CD14-positive monocyte (primary cell): ENCODE measurements at regions of chr9 and their contacts with region 1.

Region 1: DNA sequence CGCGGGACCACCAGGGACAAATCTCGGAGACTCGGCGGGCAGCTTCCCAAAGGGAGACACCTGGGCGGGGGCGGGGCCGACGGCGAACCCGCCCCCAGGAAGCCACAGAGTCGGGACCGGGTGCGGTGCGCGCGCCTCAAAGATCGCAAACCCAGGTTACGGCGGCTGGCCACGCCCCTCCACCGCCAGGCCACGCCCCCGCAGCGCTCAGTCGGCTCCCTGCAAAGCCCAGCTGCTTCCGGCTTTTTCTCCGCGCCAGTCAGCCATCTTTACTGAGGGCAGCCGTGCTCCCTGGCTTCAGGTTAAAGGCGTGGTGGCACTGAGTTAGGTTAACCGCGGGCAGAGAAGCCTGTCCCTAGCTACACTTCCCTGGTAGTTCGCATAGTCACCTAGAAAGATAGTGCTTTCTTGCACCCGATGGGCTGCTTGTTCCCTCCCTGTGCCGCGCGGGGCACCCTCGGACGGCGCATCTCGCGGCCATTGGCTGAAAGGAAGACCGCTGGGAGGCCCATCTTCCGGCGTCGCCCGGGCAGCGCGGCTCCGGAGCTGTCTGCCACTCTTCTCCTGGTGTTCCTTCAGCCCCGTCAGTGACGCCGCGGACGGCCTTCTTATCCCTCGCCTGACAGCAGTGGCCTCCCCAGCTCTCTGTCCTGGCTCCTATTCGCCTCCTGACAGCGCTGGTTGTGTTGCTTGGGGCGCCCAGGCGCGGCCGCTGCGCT is at the start of gene TBC1D2:
- DNase-seq: peak; percentile 92 to 95 (median 94)
- H3K4me3 ChIP-seq: peak within 1 kb of the TSS; percentile 57 to 98 (median 86)
- H3K4me3 Mint-ChIP-seq: peak within 1 kb of the TSS; percentile 95 to 98
- H3K27ac ChIP-seq: peak within 1 kb of the TSS; percentile 93 to 96
- H3K27ac Mint-ChIP-seq: peak within 1 kb of the TSS; percentile 95 to 99 (median 98)
- H3K4me1 ChIP-seq: peaks cover 50 to 51% of the 10 kb centered on the region in 2 donors
- H3K4me1 Mint-ChIP-seq: peaks cover 48% of the 10 kb centered on the region
- H3K27me3 ChIP-seq: no peaks in the 10 kb centered on the region
- H3K27me3 Mint-ChIP-seq: no peaks in the 10 kb centered on the region
- CTCF ChIP-seq: peak; percentile 20
- polyA plus RNA-seq, gene TBC1D2: 23.2 to 55.7 (median 34.4) TPM

Region 2: DNA sequence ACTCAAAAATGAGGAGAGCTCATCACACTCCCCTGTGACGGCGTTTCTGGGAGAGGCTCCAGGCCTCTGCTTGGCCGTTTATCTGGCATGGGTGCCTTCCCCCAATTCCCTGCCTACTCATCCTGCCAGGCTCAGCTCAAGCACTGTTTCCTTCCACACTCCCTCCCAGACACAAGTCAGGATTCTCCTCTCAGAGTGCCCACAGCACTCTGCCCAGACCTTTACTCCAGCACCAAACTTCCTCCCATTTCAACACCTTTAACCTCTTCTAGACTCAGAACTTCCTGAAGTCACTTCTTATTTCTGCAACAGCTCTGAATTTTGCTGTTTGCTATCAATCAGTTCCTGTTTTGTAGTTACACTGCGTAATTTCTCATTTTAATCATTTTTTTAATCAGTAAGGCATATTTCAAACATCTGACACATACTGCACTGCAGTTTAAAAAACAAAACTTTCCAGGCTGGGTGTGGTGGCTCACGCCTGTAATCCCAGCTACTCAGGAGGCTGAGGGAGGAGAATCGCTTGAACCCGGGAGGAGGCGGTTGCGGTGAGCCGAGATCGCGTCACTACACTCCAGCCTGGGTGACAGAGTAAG is 349.4 kb before region 1 on chr9:
- intact Hi-C with region 1: loop called in 1 of 2 experiments (anchors 5 kb)
- DNase-seq: peak; percentile 79 to 94 (median 88)
- H3K4me3 ChIP-seq: peak overlapping the region; percentile 1 to 56 (median 24)
- H3K4me3 Mint-ChIP-seq: peak overlapping the region; percentile 74 to 83
- H3K27ac ChIP-seq: peak overlapping the region; percentile 87 to 95
- H3K27ac Mint-ChIP-seq: peak overlapping the region; percentile 95 to 99 (median 98)
- H3K4me1 ChIP-seq: peaks cover 53 to 64% of the 10 kb centered on the region in 2 donors
- H3K4me1 Mint-ChIP-seq: peaks cover 54% of the 10 kb centered on the region
- H3K27me3 ChIP-seq: no peaks in the 10 kb centered on the region
- H3K27me3 Mint-ChIP-seq: peaks cover 0 to 4% (median 0%) of the 10 kb centered on the region in 3 donors
- CTCF ChIP-seq: no peak

Region 3: GRCh38 chr9:97921959-97922724 is 333.6 kb before region 1 on chr9 and contains the start of gene TRMO:
- intact Hi-C with region 1: loop called (anchors 5 to 10 kb)
- DNase-seq: peak; percentile 99 to 100 (median 99)
- H3K4me3 ChIP-seq: peak within 1 kb of the TSS; percentile 53 to 89 (median 83)
- H3K4me3 Mint-ChIP-seq: peak within 1 kb of the TSS; percentile 84 to 97
- H3K27ac ChIP-seq: peak within 1 kb of the TSS; percentile 94 to 98
- H3K27ac Mint-ChIP-seq: peak within 1 kb of the TSS; percentile 99 to 100 (median 99)
- H3K4me1 ChIP-seq: peaks cover 39 to 54% of the 10 kb centered on the region in 2 donors
- H3K4me1 Mint-ChIP-seq: peaks cover 49% of the 10 kb centered on the region
- H3K27me3 ChIP-seq: no peaks in the 10 kb centered on the region
- H3K27me3 Mint-ChIP-seq: no peaks in the 10 kb centered on the region
- CTCF ChIP-seq: peak; percentile 22
- polyA plus RNA-seq, gene TRMO: 13.4 to 20.6 (median 13.5) TPM

Region 4: DNA sequence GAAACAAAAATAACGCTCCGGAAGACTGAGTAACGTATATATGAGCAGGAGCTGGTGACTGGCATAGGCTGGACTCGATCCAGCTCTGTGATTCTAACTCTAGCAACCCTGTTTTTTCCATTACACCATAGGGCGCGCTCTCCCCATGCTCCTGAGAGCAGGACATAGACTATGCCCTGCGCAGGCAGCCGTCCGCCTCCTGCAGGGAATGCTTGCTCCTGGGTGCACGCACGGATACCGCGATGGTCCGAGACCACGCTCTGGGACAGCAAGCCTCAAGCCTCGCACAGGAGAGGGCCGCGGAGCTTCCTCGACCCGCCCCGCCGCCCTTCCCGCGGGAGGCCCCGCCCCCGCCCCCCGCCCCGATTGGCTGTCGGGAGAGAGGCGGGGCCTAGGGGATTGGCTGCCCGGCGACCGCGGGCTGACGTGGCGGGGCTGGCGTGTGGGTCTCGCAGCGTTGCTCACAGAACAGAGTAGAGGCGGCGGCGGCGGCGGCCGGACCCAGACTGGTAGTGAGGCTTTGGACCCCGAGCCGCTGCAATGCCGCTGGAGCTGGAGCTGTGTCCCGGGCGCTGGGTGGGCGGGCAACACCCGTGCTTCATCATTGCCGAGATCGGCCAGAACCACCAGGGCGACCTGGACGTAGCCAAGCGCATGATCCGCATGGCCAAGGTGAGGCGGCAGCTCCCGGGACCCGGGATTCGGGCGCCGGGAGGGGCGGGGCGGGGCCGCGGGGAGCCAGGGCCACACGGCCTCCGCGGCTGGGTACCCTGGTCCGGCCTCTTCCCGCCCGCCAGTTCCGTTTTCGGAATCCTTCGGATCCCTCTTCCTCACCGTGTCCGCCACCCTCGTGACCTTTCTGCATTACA is 199.2 kb before region 1 on chr9 and contains the start of gene NANS:
- intact Hi-C with region 1: loop called in 1 of 2 experiments (anchors 5 kb)
- DNase-seq: peak; percentile 88 to 92 (median 90)
- H3K4me3 ChIP-seq: peak within 1 kb of the TSS; percentile 69 to 99 (median 90)
- H3K4me3 Mint-ChIP-seq: peak within 1 kb of the TSS; percentile 99
- H3K27ac ChIP-seq: peak within 1 kb of the TSS; percentile 90 to 95
- H3K27ac Mint-ChIP-seq: peak within 1 kb of the TSS; percentile 96 to 99 (median 98)
- H3K4me1 ChIP-seq: peaks cover 23 to 24% of the 10 kb centered on the region in 2 donors
- H3K4me1 Mint-ChIP-seq: peaks cover 32% of the 10 kb centered on the region
- H3K27me3 ChIP-seq: no peaks in the 10 kb centered on the region
- H3K27me3 Mint-ChIP-seq: no peaks in the 10 kb centered on the region
- CTCF ChIP-seq: no peak
- polyA plus RNA-seq, gene NANS: 41.3 to 109 (median 95.9) TPM

Region 5: GRCh38 chr9:98118640-98119601 is 136.8 kb before region 1 on chr9 and contains the start of gene TRIM14:
- intact Hi-C with region 1: loop called (anchors 10 kb)
- DNase-seq: peak; percentile 43 to 50 (median 46)
- H3K4me3 ChIP-seq: peak within 1 kb of the TSS; percentile 68 to 89 (median 72)
- H3K4me3 Mint-ChIP-seq: peak within 1 kb of the TSS; percentile 86 to 93
- H3K27ac ChIP-seq: peak within 1 kb of the TSS; percentile 87 to 89
- H3K27ac Mint-ChIP-seq: peak within 1 kb of the TSS; percentile 94 to 98 (median 96)
- H3K4me1 ChIP-seq: peaks cover 40 to 43% of the 10 kb centered on the region in 2 donors
- H3K4me1 Mint-ChIP-seq: peaks cover 54% of the 10 kb centered on the region
- H3K27me3 ChIP-seq: no peaks in the 10 kb centered on the region
- H3K27me3 Mint-ChIP-seq: no peaks in the 10 kb centered on the region
- CTCF ChIP-seq: no peak
- polyA plus RNA-seq, gene TRIM14: 23.0 to 30.6 (median 28.5) TPM

Region 6: GRCh38 chr9:98129451-98129881 is 126.3 kb before region 1 on chr9:
- intact Hi-C with region 1: loop called in 1 of 2 experiments (anchors 10 kb)
- DNase-seq: peak; percentile 90 to 96 (median 95)
- H3K4me3 ChIP-seq: peak overlapping the region in 1 of 3 experiments; percentile 33
- H3K4me3 Mint-ChIP-seq: peak overlapping the region; percentile 12 to 60
- H3K27ac ChIP-seq: peak overlapping the region; percentile 84 to 88
- H3K27ac Mint-ChIP-seq: peak overlapping the region; percentile 91 to 98 (median 94)
- H3K4me1 ChIP-seq: peaks cover 23% of the 10 kb centered on the region in 2 donors
- H3K4me1 Mint-ChIP-seq: peaks cover 28% of the 10 kb centered on the region
- H3K27me3 ChIP-seq: no peaks in the 10 kb centered on the region
- H3K27me3 Mint-ChIP-seq: peaks cover 0 to 4% (median 0%) of the 10 kb centered on the region in 3 donors
- CTCF ChIP-seq: no peak

Region 7: GRCh38 chr9:98201102-98201501 is 54.6 kb before region 1 on chr9:
- intact Hi-C with region 1: no loop called
- DNase-seq: no peak
- H3K4me3 ChIP-seq: no peak overlapping the region
- H3K4me3 Mint-ChIP-seq: no peak overlapping the region
- H3K27ac ChIP-seq: peak overlapping the region in 1 of 2 donors; percentile 28
- H3K27ac Mint-ChIP-seq: peak overlapping the region in 3 of 7 donors; percentile 10 to 54 (median 19)
- H3K4me1 ChIP-seq: no peaks in the 10 kb centered on the region
- H3K4me1 Mint-ChIP-seq: peaks cover 4% of the 10 kb centered on the region
- H3K27me3 ChIP-seq: no peaks in the 10 kb centered on the region
- H3K27me3 Mint-ChIP-seq: peaks cover 0 to 2% (median 0%) of the 10 kb centered on the region in 3 donors
- CTCF ChIP-seq: no peak

Region 8: DNA sequence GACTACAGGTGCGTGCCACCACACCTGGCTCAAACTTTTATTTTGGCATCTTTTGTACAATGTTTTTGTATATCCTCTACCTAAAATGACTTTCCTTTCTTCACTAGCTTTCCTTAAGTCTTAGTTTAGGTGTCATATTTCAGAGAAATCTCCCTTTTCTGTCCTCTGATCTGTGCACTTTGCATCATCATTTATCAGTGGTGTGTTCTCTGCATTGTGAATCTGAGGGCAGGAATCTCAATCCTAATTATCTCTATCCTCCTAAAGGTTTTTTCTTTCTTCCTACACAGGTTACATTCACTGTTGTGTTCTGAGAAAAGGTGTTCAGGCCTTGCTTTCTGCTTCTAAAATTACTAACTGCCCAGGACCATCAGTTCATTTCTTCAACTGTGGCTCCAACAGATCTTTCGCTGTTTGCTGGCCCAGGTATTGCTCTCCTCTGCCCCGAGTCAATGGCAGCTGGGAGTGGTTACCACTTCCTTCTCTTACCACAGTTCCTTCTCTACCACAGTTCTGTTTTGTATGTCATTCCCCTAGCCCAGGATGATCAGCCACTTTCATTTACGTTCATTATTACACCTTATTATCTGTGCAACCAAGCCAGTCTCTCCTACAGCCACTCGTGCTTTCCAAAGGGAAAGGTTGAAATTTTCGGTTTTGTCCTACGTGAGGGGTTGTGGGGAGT is 863.2 kb after region 1 on chr9:
- intact Hi-C with region 1: loop called in 1 of 2 experiments (anchors 5 kb)
- DNase-seq: peak; percentile 52 to 67 (median 60)
- H3K4me3 ChIP-seq: peak overlapping the region; percentile 24 to 70 (median 26)
- H3K4me3 Mint-ChIP-seq: peak overlapping the region; percentile 70 to 87
- H3K27ac ChIP-seq: peak overlapping the region; percentile 6 to 82
- H3K27ac Mint-ChIP-seq: peak overlapping the region; percentile 82 to 94 (median 91)
- H3K4me1 ChIP-seq: peaks cover 35 to 41% of the 10 kb centered on the region in 2 donors
- H3K4me1 Mint-ChIP-seq: peaks cover 55% of the 10 kb centered on the region
- H3K27me3 ChIP-seq: no peaks in the 10 kb centered on the region
- H3K27me3 Mint-ChIP-seq: no peaks in the 10 kb centered on the region
- CTCF ChIP-seq: no peak